ENCODE measurements at regions of chr6 and their contacts with region 1.

Region 1: GRCh38 chr6:37791156-37791919 is 28.2 kb upstream of the ZFAND3 start:
- DNase-seq: peak; percentile 95 to 98 (median 97)
- ATAC-seq: peak; percentile 100
- H3K4me3 ChIP-seq: no peak overlapping the region
- H3K27ac ChIP-seq: no peak overlapping the region
- H3K4me1 ChIP-seq: peaks cover 9 to 10% of the 10 kb centered on the region in 2 experiments; a peak in 4 of 5 replicates
- H3K27me3 ChIP-seq: peaks cover 6 to 17% of the 10 kb centered on the region in 2 experiments; a peak in 3 of 5 replicates
- CTCF ChIP-seq: peak; percentile 95 to 99 (median 95)
- EP300 ChIP-seq: peak; percentile 79
- POLR2A ChIP-seq: no peak
- RAD21 ChIP-seq: peak; percentile 96 to 98

Region 2: DNA sequence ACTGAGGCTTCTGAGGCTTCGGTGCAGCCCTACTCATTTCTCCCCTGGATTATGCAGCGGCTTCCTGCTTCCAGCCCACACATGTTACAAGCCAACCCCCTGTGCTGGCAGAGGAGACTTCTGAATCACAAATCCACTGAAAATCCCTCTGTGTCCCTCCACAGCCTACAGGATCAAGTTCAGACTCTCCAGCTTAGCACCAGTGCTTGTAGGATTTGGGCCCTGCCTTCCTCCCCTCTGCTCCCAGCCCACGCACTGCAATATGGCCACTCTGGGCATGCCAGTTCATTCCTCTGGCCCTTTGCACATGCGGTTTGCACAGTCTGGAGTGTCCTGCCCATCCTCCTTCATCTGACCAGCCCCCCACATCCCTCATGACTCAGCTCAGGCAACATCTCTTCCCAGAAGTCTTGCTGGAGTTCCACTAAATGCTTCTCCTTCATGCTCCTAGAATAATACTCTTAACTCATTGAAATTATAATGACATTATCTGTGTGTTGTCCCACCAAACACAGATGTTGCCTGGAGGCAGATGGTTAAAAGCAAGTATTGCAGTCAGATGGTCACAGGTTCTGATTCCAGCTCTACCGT is 77.7 kb before region 1 on chr6:
- CTCF ChIA-PET with region 1: no interaction called
- POLR2A ChIA-PET with region 1: interaction called, 3 read pairs
- in situ Hi-C with region 1: no loop called
- intact Hi-C with region 1: loop called (anchors 5 kb)
- DNase-seq: peak; percentile 65 to 74 (median 70)
- ATAC-seq: peak; percentile 39
- H3K4me3 ChIP-seq: no peak overlapping the region
- H3K27ac ChIP-seq: no peak overlapping the region; the same call in 2 of the 3 replicates
- H3K4me1 ChIP-seq: peaks cover 22 to 32% of the 10 kb centered on the region in 2 experiments; a peak in 4 of 5 replicates
- H3K27me3 ChIP-seq: no peaks in the 10 kb centered on the region; a peak in 1 of 5 replicates
- CTCF ChIP-seq: no peak
- EP300 ChIP-seq: peak; percentile 71
- POLR2A ChIP-seq: no peak
- RAD21 ChIP-seq: no peak

Region 3: DNA sequence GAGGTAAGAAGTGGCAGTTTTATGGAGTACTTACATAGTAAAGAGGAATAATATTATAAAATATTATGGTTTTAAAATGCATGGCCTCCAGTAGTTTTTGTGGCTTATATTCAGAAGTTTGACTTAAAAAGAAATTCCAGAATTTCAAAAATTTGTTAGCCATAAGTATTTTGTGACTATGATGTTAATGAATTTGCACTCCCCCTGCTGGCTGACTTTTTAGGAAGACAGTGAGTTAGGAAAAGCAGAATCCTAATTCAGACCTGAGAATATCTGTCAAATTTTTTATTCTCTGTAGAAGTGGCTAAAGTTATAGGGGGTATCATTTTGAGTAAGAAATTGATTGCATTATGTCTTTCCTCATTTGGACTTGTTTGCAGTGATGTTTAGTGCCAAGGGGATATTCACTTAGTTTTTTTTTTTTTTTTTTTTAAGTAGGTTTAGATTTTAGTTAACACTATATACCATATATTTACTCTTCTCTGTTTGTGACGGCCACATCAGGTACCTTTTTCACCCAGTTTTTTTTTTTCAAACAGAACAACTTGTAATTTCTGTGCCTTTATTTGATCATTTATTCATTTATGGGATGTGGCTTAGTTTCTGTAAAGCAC is 69.0 kb after region 1 on chr6:
- CTCF ChIA-PET with region 1: interaction called, 19 read pairs
- POLR2A ChIA-PET with region 1: interaction called, 4 read pairs
- in situ Hi-C with region 1: no loop called
- intact Hi-C with region 1: loop called (anchors 1 kb)
- DNase-seq: peak in 3 of 4 experiments; percentile 22 to 57 (median 28)
- ATAC-seq: peak; percentile 79
- H3K4me3 ChIP-seq: no peak overlapping the region
- H3K27ac ChIP-seq: no peak overlapping the region
- H3K4me1 ChIP-seq: no peaks in the 10 kb centered on the region
- H3K27me3 ChIP-seq: no peaks in the 10 kb centered on the region
- CTCF ChIP-seq: peak; percentile 34 to 67 (median 53); a peak in 3 of 6 replicates
- EP300 ChIP-seq: no peak
- POLR2A ChIP-seq: no peak
- RAD21 ChIP-seq: peak; percentile 36 to 62; a peak in 3 of 4 replicates

Measured in K562 (cell line).